CD4-positive, alpha-beta T cell (primary cell): ENCODE measurements at regions of chr6 and their contacts with region 1.

Region 1: DNA sequence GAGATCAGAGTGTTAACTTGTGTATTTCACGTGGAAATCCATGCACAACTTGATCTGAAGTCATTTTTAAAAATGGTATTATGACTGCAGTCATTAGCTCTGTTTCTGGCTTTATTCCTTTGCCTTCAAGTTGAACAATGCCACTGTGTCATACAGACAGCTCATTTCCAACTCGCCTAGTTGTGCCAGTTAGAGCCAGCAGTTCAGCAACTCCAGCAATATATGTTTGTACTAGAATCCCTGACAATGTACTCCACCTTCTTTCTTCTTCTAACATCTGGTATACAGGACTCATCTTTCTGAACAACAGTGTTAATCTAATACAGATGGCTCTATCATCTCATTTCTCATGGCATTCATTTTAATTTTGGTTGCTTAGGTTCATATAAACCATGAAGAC is 418.3 kb upstream of the POU3F2 start:
- DNase-seq: no peak
- ATAC-seq: no peak
- H3K4me3 ChIP-seq: no peak overlapping the region
- H3K4me3 Mint-ChIP-seq: no peak overlapping the region
- H3K27ac ChIP-seq: no peak overlapping the region
- H3K27ac Mint-ChIP-seq: no peak overlapping the region
- H3K4me1 ChIP-seq: no peaks in the 10 kb centered on the region
- H3K4me1 Mint-ChIP-seq: no peaks in the 10 kb centered on the region
- H3K27me3 ChIP-seq: no peaks in the 10 kb centered on the region
- H3K27me3 Mint-ChIP-seq: no peaks in the 10 kb centered on the region
- CTCF ChIP-seq: no peak

Region 2: GRCh38 chr6:98395610-98396166 is 20.3 kb before region 1 on chr6:
- CTCF ChIA-PET with region 1: no interaction called
- POLR2A ChIA-PET with region 1: no interaction called
- intact Hi-C with region 1: loop called in 1 of 2 experiments (anchors 2 kb)
- DNase-seq: no peak
- ATAC-seq: no peak
- H3K4me3 ChIP-seq: no peak overlapping the region
- H3K4me3 Mint-ChIP-seq: no peak overlapping the region
- H3K27ac ChIP-seq: no peak overlapping the region
- H3K27ac Mint-ChIP-seq: no peak overlapping the region
- H3K4me1 ChIP-seq: no peaks in the 10 kb centered on the region
- H3K4me1 Mint-ChIP-seq: no peaks in the 10 kb centered on the region
- H3K27me3 ChIP-seq: no peaks in the 10 kb centered on the region
- H3K27me3 Mint-ChIP-seq: no peaks in the 10 kb centered on the region
- CTCF ChIP-seq: no peak